Left colon (tissue), 2 donors: ENCODE measurements at regions of chr16 and their contacts with region 1.

Region 1: DNA sequence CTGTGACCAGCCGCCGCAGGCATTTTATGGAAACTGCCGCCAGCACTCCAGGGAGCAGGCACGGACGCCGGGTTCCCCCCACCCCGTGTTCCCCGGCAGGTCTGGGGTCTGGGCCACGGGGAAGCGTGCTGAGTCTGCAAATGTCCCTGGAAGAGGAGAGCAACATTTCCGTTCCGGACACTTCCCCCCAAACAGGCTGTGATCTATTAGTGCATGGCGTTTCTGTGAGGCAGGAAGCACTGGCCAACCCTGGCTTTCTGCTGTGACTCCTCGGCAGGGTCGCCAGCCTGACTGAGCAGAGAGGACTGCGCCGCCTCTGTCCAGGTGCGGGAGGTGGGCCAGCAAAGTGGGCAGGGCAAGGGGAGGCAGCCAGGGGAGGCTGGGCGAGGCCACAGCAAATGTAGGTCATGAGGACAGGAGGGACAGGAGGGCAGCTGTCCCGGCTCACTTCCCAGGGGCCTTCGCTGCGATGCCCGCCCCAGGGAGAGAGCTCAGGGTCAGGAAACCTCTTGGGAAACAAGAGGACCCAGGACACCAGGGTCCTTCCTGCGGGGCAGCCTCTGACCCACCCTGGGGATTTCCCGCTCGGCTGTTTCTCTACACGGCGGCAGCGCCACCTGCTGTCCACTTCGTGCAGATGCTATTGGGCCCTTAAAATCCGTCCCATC is 9.5 kb downstream of the FOXF1 start:
- DNase-seq: peak in 1 of 2 donors; percentile 72
- ATAC-seq: peak; percentile 55

Region 2: GRCh38 chr16:86059253-86060171 is 460.3 kb before region 1 on chr16:
- intact Hi-C with region 1: loop called in 1 of 2 experiments (anchors 10 kb)
- DNase-seq: peak; percentile 40 to 53
- ATAC-seq: no peak

Region 3: DNA sequence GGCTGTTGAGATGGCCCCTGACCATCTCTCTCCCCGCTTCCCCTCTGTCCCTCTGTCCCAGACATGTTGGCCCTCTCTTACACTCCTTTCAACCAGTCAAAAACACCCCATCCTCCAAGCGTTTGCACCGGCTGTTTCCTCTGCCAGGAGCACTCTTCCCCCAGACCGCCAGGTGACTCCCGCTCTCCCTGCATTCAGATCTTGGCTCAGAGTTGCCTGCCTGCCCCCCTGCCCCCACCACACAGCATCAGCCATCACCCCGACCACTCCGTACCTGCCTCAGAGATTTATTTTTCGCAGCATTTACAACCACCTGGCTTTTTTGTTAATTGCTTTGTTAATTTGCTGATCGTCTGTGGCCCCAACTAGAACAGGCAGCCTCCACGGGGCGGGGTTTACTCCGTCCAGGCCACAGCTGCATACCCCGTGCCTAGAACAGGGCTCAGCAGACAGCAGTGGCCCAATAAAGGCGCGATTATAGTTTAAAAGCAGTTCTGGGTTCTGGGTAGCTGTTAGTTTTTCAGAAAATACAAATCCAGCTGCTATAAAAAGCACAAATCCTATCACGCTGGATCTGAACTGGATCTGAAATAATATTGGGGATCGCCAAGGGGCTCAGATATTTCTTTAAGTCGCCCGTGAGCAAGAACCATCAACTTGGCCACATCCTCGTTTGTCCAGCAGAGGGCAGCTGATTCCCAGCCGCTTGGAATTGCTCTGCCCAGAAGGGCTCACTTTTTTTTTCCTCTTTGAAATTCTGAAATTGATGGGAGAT is 447.3 kb before region 1 on chr16:
- intact Hi-C with region 1: loop called (anchors 5 to 10 kb)
- DNase-seq: peak; percentile 49 to 71
- ATAC-seq: peak; percentile 73

Region 4: DNA sequence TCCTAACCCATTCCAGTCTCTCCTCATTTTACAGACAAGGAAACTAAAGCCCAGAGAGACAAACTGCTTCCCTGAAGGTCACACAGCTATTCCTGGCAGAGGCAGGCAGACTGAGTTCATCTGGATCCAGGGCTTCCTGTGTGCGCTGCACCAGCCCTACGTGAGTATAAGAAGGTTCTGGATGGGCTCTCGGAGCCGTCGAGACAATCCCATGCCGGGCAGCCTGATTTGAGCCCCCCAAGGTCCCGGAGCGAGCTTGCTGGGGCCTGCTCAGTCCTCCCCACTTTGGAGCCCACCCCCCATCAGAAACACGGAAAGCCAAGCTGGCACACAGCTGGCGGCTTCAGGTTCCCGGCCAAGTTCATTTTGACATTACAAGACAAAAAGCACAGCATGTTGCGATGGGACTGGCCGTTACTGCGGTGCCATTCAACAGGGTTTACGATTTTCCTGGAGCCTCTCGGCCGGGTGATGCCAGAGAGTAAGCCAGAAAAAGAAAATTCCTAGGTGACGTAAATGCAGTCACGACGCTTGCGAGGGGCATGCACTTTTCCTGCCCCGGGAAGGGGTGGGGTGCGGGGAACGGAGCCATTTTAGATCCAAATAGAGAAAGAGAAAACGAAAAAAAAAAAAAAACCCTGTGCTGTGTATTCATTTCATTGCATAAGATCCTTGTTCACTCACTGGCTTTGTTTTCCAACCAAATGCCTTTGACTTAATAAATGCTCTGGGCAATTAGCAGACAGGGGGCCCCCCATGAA is 176.6 kb before region 1 on chr16:
- intact Hi-C with region 1: loop called in 1 of 2 experiments (anchors 10 kb)
- DNase-seq: peak; percentile 47 to 81
- ATAC-seq: peak; percentile 29

Region 5: DNA sequence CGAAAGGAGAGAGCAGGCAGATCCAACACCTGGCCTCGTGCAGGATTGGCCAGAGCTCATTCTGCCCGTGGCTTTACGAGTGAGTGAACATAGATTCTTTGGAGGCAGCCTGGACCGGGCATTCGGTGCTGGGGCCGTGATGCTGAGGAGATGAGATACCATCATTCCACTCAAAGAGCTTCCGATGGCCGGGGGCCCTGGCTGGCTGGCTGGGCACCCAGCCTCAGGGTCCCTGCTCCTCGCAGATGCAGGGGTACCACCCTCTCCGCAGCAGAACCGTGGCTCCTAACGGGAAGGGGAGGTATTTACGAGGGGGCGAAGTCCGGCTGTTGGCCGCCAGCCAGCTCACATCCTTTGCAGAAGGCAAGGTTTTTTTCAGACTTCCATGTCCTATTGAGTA is 75.5 kb before region 1 on chr16:
- intact Hi-C with region 1: no loop called
- DNase-seq: no peak
- ATAC-seq: no peak

Region 6: DNA sequence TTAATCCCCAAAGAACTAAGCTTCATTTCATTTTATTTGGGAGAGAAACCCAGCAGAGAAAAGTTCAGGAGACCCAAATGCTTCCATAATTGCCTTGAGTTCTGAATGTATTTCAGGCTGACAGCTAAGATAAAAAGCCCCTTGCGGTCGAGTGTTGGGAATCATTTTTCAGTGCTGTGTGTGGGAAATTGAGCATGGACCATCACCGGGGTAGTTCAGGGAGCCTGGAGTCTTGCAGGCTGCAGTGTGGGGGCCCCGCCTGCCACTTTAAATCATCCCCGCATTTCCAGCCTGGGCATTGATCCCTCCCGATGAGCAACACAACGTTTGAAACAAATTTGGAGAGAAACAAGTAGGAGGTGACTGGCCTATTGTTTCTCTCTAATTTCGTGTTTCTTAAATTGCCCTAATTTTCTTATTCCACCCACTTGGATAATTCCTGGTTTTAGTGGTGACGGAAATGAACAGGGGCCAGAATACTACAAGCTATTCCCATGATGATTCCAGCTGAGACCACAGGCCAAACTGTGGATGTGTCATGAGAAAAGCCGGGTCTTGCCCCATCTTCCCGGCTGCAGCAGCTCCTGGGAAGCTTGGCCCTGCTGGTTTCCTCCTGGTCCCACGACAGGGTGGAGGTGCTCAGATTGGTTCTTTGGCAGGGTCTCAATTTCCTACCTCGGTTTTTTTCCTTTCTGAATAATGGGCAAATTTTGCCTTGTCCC is 133.7 kb after region 1 on chr16:
- intact Hi-C with region 1: no loop called
- DNase-seq: no peak
- ATAC-seq: no peak